ENCODE measurements at regions of chr17 and their contacts with region 1.

Region 1: DNA sequence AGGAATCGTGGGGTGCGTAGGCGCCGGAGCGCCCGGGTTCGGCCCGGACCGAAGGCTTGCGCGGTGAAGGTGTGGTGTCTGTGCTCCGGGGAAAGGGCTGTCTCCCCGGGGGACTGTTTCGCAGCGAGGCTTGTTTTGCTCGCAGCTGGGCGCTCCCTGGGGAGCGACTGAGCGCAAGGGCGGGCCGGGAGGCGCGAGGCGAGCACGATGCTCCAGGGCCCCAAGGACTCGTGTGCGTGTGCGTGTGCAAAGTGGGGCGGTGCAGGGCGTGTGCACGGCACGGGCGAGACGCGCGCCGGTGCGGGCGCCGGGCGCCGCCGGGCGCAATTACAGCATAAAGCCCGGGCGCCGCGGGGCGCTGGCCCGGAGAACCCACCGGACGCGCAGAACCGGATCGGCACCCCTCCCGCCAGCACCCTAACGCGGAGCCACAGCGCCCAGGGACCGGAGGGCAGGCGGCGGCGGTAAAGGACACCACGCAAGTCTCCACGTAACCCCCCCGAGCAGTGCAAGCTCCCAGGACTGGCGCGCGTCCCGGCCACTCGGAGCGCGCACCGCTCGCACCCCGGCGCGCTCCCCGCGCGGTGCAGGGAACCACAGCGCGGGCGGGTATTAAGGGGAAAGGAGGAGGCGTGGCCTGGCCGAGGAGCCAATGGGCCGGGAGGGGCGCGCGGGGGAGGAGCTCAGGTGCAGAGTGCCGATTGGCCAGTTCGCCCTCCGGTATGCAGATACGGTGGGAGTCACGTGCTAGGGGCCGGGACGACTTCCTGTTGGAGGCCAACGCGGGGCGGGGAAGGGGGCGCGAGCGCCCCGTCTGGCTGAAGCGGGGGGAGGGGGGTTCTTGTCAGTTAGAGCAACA is at the start of gene TNRC6C:
- DNase-seq: peak; percentile 99 to 100 (median 100)
- H3K4me3 ChIP-seq: peak within 1 kb of the TSS; percentile 80 to 92
- H3K4me3 Mint-ChIP-seq: peak within 1 kb of the TSS; percentile 93 to 100 (median 98)
- H3K27ac ChIP-seq: peak within 1 kb of the TSS; percentile 68
- H3K27ac Mint-ChIP-seq: peak within 1 kb of the TSS; percentile 91 to 97 (median 95)
- H3K4me1 ChIP-seq: peaks cover 42% of the 10 kb centered on the region
- H3K4me1 Mint-ChIP-seq: peaks cover 25 to 51% (median 38%) of the 10 kb centered on the region in 4 donors
- H3K27me3 ChIP-seq: no peaks in the 10 kb centered on the region
- H3K27me3 Mint-ChIP-seq: peaks cover 0 to 4% of the 10 kb centered on the region in 2 donors
- total RNA-seq, gene TNRC6C: 105 to 112 TPM

Region 2: DNA sequence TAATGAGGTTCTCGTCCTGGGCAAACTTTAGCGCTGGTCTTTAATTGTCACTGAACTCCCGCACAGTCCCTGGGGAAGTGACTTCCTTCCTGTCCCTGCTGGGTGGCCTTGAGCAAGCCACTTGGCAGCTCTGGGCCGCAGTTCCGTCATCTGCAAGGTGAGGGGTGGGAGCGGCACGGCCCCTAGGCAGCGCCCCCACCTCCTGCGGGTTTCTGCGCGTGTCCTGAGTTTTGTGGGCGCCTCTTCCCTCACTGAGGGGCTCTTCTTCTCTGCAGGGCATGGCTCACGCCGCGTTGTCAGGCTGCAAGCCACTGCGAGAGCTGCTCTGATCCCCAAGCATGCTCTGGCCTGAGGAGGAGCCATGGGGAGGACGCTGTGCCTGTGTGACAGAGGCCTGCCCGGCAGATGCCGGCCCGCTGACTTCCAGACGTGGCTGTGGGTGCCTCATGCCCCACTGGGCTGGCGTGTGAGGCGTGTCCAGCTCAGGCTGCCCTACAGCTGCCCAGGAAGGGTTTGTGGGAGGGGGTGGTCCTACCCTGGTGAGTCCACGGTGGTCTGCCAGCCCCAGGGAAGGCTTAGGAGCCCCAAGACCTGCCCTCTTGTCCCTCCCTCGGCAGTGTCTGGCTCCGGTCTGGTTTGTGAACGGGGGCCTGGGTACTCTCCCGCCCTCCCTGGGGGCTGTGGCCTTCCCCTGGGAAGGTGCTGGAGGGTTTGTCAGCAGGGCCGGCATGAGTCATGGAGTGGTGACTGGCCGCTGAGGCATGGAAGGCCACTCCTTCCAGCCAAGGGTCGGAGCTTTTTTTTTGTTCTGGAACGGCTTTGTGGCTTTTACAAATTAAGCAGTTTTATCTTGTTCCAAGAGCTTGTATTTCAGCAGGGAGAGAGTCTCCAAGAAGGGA is 635.3 kb before region 1 on chr17:
- CTCF ChIA-PET with region 1: no interaction called
- POLR2A ChIA-PET with region 1: interaction called, 10 read pairs
- intact Hi-C with region 1: no loop called
- DNase-seq: no peak
- H3K4me3 ChIP-seq: no peak overlapping the region
- H3K4me3 Mint-ChIP-seq: peak overlapping the region in 1 of 8 donors; percentile 13
- H3K27ac ChIP-seq: no peak overlapping the region
- H3K27ac Mint-ChIP-seq: no peak overlapping the region
- H3K4me1 ChIP-seq: peaks cover 69% of the 10 kb centered on the region
- H3K4me1 Mint-ChIP-seq: peaks cover 30 to 68% (median 51%) of the 10 kb centered on the region in 4 donors
- H3K27me3 ChIP-seq: no peaks in the 10 kb centered on the region
- H3K27me3 Mint-ChIP-seq: no peaks in the 10 kb centered on the region

Region 3: GRCh38 chr17:77645072-77646045 is 312.7 kb before region 1 on chr17:
- CTCF ChIA-PET with region 1: interaction called, 4 read pairs
- POLR2A ChIA-PET with region 1: interaction called, 18 read pairs
- intact Hi-C with region 1: loop called (anchors 2 kb)
- DNase-seq: peak; percentile 52 to 81 (median 60)
- H3K4me3 ChIP-seq: peak overlapping the region; percentile 55 to 57
- H3K4me3 Mint-ChIP-seq: peak overlapping the region; percentile 80 to 95 (median 86)
- H3K27ac ChIP-seq: peak overlapping the region; percentile 16
- H3K27ac Mint-ChIP-seq: peak overlapping the region; percentile 77 to 94 (median 88)
- H3K4me1 ChIP-seq: peaks cover 20% of the 10 kb centered on the region
- H3K4me1 Mint-ChIP-seq: peaks cover 9 to 30% (median 22%) of the 10 kb centered on the region in 4 donors
- H3K27me3 ChIP-seq: no peaks in the 10 kb centered on the region
- H3K27me3 Mint-ChIP-seq: no peaks in the 10 kb centered on the region

Region 4: DNA sequence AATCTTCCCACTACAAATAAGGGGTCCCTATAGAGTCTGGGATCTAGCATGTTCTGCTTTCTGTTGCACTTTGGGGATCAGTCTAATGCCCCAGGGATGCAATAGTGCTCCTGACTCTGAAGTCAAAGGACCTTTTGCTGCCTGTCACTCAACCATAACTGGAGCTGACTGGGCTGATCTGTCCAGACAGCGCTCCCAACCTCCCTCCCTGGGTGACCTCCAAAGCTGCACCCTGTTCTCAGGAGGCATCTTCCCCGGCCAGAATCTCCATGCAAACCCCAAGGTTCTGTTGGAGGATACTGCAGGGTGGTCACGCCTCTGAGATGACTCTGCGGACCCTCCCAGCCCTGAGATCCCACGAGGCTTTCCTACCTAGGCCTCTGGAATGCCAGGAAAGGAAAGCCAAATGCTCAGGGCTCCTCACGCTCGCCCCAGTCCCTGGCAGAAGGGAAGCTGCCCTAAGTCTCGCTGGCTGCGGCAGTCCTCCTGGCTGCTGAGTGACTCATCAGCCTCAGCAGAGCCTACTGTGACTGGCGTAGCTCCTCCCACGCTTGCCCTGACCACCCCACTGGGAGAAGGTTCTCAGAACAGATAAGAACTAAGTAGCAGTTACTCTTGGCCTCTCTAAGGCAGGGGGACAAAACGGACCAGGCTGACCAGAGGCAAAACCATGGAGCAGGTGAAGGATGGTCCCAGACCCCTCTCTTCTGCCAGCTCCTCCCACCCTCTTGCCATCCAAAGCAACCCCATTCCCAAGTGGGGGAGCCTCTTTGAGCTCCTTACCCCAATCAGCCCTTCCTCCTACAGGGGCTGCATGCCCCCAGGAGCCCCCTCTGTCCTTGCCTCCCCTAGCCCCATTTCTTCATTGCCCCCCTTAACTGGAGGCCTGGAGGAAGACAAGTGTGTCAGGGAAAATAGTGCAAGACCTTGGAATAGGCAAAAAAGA is 123.6 kb before region 1 on chr17:
- CTCF ChIA-PET with region 1: interaction called, 4 read pairs
- POLR2A ChIA-PET with region 1: interaction called, 17 read pairs
- intact Hi-C with region 1: no loop called
- DNase-seq: peak in 4 of 5 donors; percentile 19 to 76 (median 22)
- H3K4me3 ChIP-seq: no peak overlapping the region
- H3K4me3 Mint-ChIP-seq: peak overlapping the region in 5 of 8 donors; percentile 21 to 65 (median 39)
- H3K27ac ChIP-seq: no peak overlapping the region
- H3K27ac Mint-ChIP-seq: peak overlapping the region; percentile 3 to 73 (median 43)
- H3K4me1 ChIP-seq: peaks cover 32% of the 10 kb centered on the region
- H3K4me1 Mint-ChIP-seq: peaks cover 24 to 67% (median 39%) of the 10 kb centered on the region in 4 donors
- H3K27me3 ChIP-seq: no peaks in the 10 kb centered on the region
- H3K27me3 Mint-ChIP-seq: no peaks in the 10 kb centered on the region

Region 5: DNA sequence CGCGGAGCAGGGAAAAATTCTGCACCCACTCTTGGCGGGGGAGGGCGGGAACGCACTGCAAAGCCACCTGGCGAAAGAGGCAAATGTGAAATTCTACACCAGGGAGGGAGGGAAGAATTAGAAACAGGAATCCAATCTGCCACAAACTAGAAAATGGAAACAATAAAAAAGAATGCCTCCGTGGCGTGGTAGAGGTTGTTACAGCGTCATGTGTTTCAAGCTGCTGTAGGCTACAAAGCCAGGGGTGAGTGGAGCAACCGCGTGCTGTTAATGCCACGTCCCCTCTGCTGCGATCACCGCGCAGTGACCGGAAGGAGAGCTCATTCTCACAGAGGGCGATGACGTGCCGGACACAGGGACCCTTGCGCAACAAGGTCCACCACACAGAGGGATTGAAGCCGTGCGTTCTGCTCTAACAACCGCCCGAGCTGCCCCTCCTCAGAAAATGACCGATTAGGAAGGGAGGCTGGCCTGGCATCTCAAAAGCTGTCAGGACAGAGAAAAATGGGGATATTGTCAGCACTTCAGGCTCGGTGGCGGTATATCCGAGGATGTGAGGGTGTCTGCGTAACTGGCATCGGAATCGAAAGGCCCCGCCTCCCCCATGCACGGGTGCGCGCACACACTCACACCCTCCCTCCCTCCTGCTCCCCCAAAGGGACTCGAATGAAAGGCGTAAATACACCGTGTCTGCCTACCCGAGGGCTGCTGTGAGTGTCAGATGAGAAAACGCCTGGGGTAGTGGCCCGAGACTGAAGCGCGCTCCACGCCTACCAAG is 70.4 kb before region 1 on chr17:
- CTCF ChIA-PET with region 1: interaction called, 4 read pairs
- POLR2A ChIA-PET with region 1: interaction called, 116 read pairs
- intact Hi-C with region 1: loop called (anchors 1 kb)
- DNase-seq: peak; percentile 81 to 92 (median 85)
- H3K4me3 ChIP-seq: peak overlapping the region; percentile 67 to 86
- H3K4me3 Mint-ChIP-seq: peak overlapping the region; percentile 91 to 96 (median 93)
- H3K27ac ChIP-seq: peak overlapping the region; percentile 95
- H3K27ac Mint-ChIP-seq: peak overlapping the region; percentile 93 to 100 (median 99)
- H3K4me1 ChIP-seq: peaks cover 47% of the 10 kb centered on the region
- H3K4me1 Mint-ChIP-seq: peaks cover 45 to 55% (median 52%) of the 10 kb centered on the region in 4 donors
- H3K27me3 ChIP-seq: no peaks in the 10 kb centered on the region
- H3K27me3 Mint-ChIP-seq: no peaks in the 10 kb centered on the region

Region 6: DNA sequence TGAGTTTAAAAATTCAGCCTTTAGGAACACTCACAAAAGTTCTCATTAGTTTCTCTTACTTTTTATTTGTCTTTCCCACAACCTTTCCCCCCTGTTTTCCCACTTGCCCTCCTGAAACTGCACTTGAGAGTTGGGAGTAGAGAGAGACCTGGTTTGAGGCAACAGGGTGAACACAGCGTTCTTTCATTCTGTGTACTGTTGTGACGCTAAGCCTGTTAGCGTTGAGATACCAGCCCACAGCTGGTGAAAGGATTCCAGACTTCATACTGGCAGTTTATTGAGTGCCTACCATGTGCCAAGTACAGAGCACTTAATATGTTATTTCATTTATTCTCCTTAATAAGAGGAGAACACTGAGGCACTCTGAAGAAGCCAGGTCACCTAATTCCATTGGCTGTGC is 10.7 kb after region 1 on chr17:
- CTCF ChIA-PET with region 1: interaction called, 3 read pairs
- POLR2A ChIA-PET with region 1: interaction called, 52 read pairs
- intact Hi-C with region 1: no loop called
- DNase-seq: no peak
- H3K4me3 ChIP-seq: no peak overlapping the region
- H3K4me3 Mint-ChIP-seq: peak overlapping the region in 2 of 8 donors; percentile 16 to 26
- H3K27ac ChIP-seq: no peak overlapping the region
- H3K27ac Mint-ChIP-seq: peak overlapping the region in 1 of 7 donors; percentile 25
- H3K4me1 ChIP-seq: peaks cover 73% of the 10 kb centered on the region
- H3K4me1 Mint-ChIP-seq: peaks cover 67 to 97% (median 79%) of the 10 kb centered on the region in 4 donors
- H3K27me3 ChIP-seq: no peaks in the 10 kb centered on the region
- H3K27me3 Mint-ChIP-seq: no peaks in the 10 kb centered on the region

Region 7: GRCh38 chr17:78128551-78129350 is 170.7 kb after region 1 on chr17 and contains the start of gene TMC6:
- CTCF ChIA-PET with region 1: no interaction called
- POLR2A ChIA-PET with region 1: interaction called, 30 read pairs
- intact Hi-C with region 1: no loop called
- DNase-seq: peak; percentile 80 to 91 (median 81)
- H3K4me3 ChIP-seq: peak within 1 kb of the TSS; percentile 97 to 99
- H3K4me3 Mint-ChIP-seq: peak within 1 kb of the TSS; percentile 95 to 100 (median 99)
- H3K27ac ChIP-seq: peak within 1 kb of the TSS; percentile 81
- H3K27ac Mint-ChIP-seq: peak within 1 kb of the TSS; percentile 95 to 99 (median 98)
- H3K4me1 ChIP-seq: peaks cover 64% of the 10 kb centered on the region
- H3K4me1 Mint-ChIP-seq: peaks cover 18 to 78% (median 34%) of the 10 kb centered on the region in 4 donors
- H3K27me3 ChIP-seq: no peaks in the 10 kb centered on the region
- H3K27me3 Mint-ChIP-seq: no peaks in the 10 kb centered on the region
- total RNA-seq, gene TMC6: 697 to 702 TPM

Measured in CD4-positive, alpha-beta memory T cell (primary cell).